CD4-positive, alpha-beta T cell (primary cell): ENCODE measurements at regions of chr9 and their contacts with region 1.

Region 1: DNA sequence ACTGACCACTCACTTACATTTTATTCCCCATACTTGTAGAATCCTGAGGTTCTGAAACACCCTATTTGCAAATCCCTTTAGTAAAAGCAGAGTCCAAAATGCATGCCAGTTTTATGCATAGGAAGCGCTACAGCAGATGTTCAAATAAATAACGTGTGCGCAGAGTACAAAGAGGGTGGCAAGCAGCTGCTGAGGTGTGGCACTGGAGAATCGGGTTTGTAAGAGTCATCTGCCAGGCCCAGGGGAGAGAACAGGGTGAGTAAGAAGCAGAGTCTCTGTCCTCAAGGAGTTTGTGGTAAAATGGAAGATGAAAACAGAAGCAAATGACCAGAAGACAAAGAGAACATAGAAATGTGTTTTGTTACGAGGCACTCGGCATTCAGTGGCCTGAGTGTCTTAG is 288.8 kb downstream of the GLIS3 start:
- DNase-seq: no peak
- ATAC-seq: no peak
- H3K4me3 ChIP-seq: no peak overlapping the region
- H3K4me3 Mint-ChIP-seq: no peak overlapping the region
- H3K27ac ChIP-seq: no peak overlapping the region
- H3K27ac Mint-ChIP-seq: no peak overlapping the region
- H3K4me1 ChIP-seq: no peaks in the 10 kb centered on the region
- H3K4me1 Mint-ChIP-seq: no peaks in the 10 kb centered on the region
- H3K27me3 ChIP-seq: peaks cover 0 to 3% of the 10 kb centered on the region in 2 experiments
- H3K27me3 Mint-ChIP-seq: no peaks in the 10 kb centered on the region
- CTCF ChIP-seq: no peak

Region 2: GRCh38 chr9:3954331-3955304 is 56.4 kb before region 1 on chr9:
- CTCF ChIA-PET with region 1: no interaction called
- POLR2A ChIA-PET with region 1: no interaction called
- intact Hi-C with region 1: loop called in 1 of 2 experiments (anchors 10 kb)
- DNase-seq: no peak
- ATAC-seq: no peak
- H3K4me3 ChIP-seq: no peak overlapping the region
- H3K4me3 Mint-ChIP-seq: no peak overlapping the region
- H3K27ac ChIP-seq: no peak overlapping the region
- H3K27ac Mint-ChIP-seq: no peak overlapping the region
- H3K4me1 ChIP-seq: no peaks in the 10 kb centered on the region
- H3K4me1 Mint-ChIP-seq: no peaks in the 10 kb centered on the region
- H3K27me3 ChIP-seq: no peaks in the 10 kb centered on the region
- H3K27me3 Mint-ChIP-seq: no peaks in the 10 kb centered on the region
- CTCF ChIP-seq: no peak

Region 3: GRCh38 chr9:3971391-3972082 is 39.5 kb before region 1 on chr9:
- CTCF ChIA-PET with region 1: no interaction called
- POLR2A ChIA-PET with region 1: no interaction called
- intact Hi-C with region 1: no loop called
- DNase-seq: no peak
- ATAC-seq: no peak
- H3K4me3 ChIP-seq: no peak overlapping the region
- H3K4me3 Mint-ChIP-seq: no peak overlapping the region
- H3K27ac ChIP-seq: no peak overlapping the region
- H3K27ac Mint-ChIP-seq: no peak overlapping the region
- H3K4me1 ChIP-seq: no peaks in the 10 kb centered on the region
- H3K4me1 Mint-ChIP-seq: no peaks in the 10 kb centered on the region
- H3K27me3 ChIP-seq: no peaks in the 10 kb centered on the region
- H3K27me3 Mint-ChIP-seq: peaks cover 17% of the 10 kb centered on the region
- CTCF ChIP-seq: no peak

Region 4: GRCh38 chr9:3992924-3993323 is 18.1 kb before region 1 on chr9:
- CTCF ChIA-PET with region 1: no interaction called
- POLR2A ChIA-PET with region 1: no interaction called
- intact Hi-C with region 1: no loop called
- DNase-seq: no peak
- ATAC-seq: no peak
- H3K4me3 ChIP-seq: no peak overlapping the region
- H3K4me3 Mint-ChIP-seq: no peak overlapping the region
- H3K27ac ChIP-seq: no peak overlapping the region
- H3K27ac Mint-ChIP-seq: no peak overlapping the region
- H3K4me1 ChIP-seq: no peaks in the 10 kb centered on the region
- H3K4me1 Mint-ChIP-seq: no peaks in the 10 kb centered on the region
- H3K27me3 ChIP-seq: no peaks in the 10 kb centered on the region
- H3K27me3 Mint-ChIP-seq: no peaks in the 10 kb centered on the region
- CTCF ChIP-seq: no peak

Region 5: DNA sequence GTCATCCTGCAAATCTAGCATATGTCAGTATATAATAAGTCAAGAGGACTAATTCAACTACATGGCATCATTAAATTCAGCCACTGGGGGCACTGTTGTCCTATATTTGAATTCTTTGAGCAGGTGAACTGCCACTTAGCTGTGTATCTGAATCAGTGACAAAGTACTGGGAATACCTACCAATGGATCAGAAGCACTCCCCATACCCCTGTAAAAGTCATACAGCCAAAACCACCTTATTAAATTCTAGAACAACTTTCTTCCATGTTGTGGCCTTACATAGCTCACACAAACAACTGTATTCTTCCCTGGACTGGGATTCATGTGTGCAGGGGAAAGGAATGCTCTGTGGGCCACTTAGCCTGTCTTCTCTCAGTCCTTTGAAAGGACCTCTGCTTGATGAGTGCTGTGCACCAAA is 593.6 kb after region 1 on chr9:
- CTCF ChIA-PET with region 1: no interaction called
- POLR2A ChIA-PET with region 1: no interaction called
- intact Hi-C with region 1: no loop called
- DNase-seq: peak in 13 of 14 experiments; percentile 20 to 83 (median 61)
- ATAC-seq: peak; percentile 74
- H3K4me3 ChIP-seq: no peak overlapping the region
- H3K4me3 Mint-ChIP-seq: no peak overlapping the region
- H3K27ac ChIP-seq: no peak overlapping the region
- H3K27ac Mint-ChIP-seq: peak overlapping the region; percentile 66
- H3K4me1 ChIP-seq: peaks cover 26% of the 10 kb centered on the region
- H3K4me1 Mint-ChIP-seq: peaks cover 54% of the 10 kb centered on the region
- H3K27me3 ChIP-seq: no peaks in the 10 kb centered on the region
- H3K27me3 Mint-ChIP-seq: no peaks in the 10 kb centered on the region
- CTCF ChIP-seq: peak; percentile 77